Activated B cell treated with CpG ODN at 0.5 μM for 24 hours (primary cell): ENCODE measurements at regions of chr9 and their contacts with region 1.

Region 1: GRCh38 chr9:503881-504852 is 289.5 kb downstream of the DOCK8 start:
- DNase-seq: peak; percentile 83
- ATAC-seq: peak; percentile 84
- H3K4me3 Mint-ChIP-seq: peak within 1 kb of the TSS; percentile 84
- H3K27ac Mint-ChIP-seq: no peak within 1 kb of the TSS
- H3K4me1 Mint-ChIP-seq: peaks cover 10% of the 10 kb centered on the region
- H3K27me3 Mint-ChIP-seq: peaks cover 13% of the 10 kb centered on the region
- CTCF ChIP-seq: no peak

Region 2: DNA sequence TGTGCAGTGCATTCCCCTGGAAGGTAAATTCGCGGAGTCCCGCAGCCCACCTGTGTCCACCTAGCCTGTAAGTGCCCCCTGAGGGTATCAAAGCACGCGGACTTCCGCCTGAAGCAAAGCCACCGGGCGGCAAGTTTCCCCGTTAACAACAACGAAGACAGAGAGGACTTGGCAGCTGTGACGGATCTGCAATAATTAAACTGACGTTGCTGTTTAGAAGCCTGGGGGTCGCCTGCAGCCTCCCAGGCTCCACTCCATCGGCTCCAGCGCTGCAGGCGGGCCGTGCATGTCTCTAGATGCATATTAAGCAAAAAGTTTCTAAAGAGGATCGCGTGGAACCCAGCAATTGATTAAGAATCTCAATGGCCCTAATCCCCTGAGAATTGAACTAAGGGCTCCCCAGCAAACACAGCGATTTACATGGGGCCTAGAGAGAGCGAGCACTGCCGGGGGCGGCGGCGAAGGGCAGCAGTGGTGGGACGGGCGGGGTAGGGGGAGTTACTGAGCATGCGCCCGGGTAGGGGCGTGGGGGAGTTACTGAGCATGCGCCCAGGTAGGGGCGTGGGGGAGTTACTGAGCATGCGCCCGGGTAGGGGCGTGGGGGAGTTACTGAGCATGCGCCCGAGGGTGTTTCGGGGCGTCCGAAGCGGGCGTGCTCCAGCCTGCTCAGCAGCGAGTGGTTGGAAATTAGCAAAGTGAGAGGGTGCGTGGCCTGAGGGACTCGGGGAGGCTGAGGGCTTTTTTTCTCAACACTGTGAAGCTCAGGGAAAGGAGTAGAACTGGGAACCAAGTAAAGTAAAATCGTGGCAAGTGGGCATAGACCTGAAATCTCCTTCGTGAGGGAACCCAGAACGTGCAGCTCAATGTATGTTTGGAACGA is 34.3 kb before region 1 on chr9:
- CTCF ChIA-PET with region 1: interaction called, 7 read pairs
- POLR2A ChIA-PET with region 1: interaction called, 11 read pairs
- intact Hi-C with region 1: loop called (anchors 1 kb)
- DNase-seq: peak; percentile 76
- ATAC-seq: peak; percentile 94
- H3K4me3 Mint-ChIP-seq: peak overlapping the region; percentile 97
- H3K27ac Mint-ChIP-seq: peak overlapping the region; percentile 95
- H3K4me1 Mint-ChIP-seq: peaks cover 28% of the 10 kb centered on the region
- H3K27me3 Mint-ChIP-seq: no peaks in the 10 kb centered on the region
- CTCF ChIP-seq: no peak

Region 3: DNA sequence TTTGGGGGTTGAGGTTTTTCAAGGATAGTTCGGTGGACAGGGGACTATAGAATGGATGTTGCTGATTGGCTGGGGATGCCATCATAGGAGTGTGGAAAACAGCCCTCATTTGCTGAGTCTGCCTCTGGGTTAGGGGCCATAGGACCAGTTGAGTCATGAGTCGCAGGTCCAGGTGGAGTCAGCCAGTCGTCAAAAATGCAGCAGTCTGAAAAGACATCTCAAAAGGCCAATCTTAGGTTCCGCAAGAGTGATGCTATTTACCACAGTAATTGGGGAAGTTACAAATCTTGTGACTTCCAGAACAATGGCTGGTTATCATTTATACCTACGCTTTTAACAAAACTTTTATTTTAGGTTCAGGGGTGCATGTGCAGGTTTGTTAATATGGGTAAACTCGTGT is 61.4 kb after region 1 on chr9:
- CTCF ChIA-PET with region 1: no interaction called
- POLR2A ChIA-PET with region 1: interaction called, 3 read pairs
- intact Hi-C with region 1: loop called (anchors 2 kb)
- DNase-seq: no peak
- ATAC-seq: peak; percentile 80
- H3K4me3 Mint-ChIP-seq: peak overlapping the region; percentile 9
- H3K27ac Mint-ChIP-seq: peak overlapping the region; percentile 30
- H3K4me1 Mint-ChIP-seq: peaks cover 42% of the 10 kb centered on the region
- H3K27me3 Mint-ChIP-seq: peaks cover 2% of the 10 kb centered on the region
- CTCF ChIP-seq: no peak